Left ventricle myocardium superior (tissue), 1 donor: ENCODE measurements at regions of chr7 and their contacts with region 1.

Region 1: GRCh38 chr7:27160546-27161213 is 4.2 kb upstream of the HOXA7 start:
- DNase-seq: peak; percentile 89
- ATAC-seq: peak; percentile 89

Region 2: DNA sequence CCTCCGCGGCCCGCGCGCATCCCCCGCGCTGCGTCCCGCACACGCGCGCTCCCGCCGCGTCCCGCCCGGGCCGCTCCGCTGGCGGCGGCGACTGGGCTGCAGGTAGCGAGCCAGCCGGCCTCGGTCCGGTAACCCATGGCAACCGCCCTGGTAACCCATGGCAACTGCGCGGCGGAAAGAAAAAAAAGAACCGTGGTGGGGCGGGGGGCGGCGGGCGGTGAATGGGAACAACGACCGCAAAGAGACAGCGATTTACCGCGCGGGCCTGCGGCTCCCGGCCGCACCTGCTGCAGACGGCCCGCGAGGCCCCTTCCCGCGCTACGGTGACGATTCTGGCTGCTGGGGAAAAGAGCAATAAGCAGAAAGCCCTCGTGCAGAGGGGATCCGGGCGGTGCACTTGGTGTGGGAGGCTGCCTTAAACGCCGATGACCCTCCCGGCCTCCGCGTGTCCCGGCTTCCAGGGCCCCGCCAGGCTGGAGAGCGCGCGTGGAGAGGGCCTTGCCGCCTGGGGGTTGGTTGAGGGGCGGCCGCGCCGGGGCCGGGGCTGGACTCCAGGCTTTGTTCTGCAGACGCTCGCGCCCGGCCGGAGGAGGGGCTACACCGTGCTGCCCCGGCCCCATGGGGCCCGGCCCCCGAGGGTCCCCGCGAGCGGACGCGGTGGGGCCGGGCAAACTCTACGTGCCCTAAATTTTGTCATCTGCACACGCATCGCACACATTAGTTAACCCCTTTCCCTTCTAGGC is 784.3 kb before region 1 on chr7:
- intact Hi-C with region 1: loop called (anchors 10 kb)
- DNase-seq: peak; percentile 30
- ATAC-seq: peak; percentile 22

Region 3: GRCh38 chr7:26681819-26682418 is 478.8 kb before region 1 on chr7:
- intact Hi-C with region 1: loop called (anchors 5 kb)
- DNase-seq: no peak
- ATAC-seq: no peak

Region 4: DNA sequence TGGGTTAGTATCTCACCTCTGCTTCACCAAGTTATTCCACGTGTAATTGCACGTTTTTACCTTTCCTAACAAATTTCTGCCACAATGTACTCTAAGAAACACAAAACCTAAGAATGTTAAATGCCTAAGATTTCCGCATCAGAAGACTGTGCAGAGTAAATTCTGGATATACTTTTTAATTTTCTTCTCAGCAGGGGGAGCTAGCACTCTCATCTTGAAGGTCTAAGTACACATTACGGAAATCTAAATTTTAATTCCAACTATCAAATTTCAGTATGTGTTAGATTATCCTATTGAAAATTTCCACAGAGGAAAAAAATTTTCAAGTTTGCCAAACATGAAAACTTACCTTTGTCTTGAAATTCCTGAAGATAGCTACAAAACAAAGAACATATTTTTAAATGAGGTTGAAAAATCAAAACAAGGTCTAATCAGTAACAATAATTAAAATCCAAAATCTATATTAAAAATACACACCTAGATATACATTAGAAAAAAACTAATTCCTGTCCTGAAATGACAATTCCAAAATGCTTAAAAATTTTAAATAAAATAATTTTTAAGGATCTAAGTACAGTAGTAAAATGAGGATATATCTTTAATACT is 306.8 kb before region 1 on chr7:
- intact Hi-C with region 1: no loop called
- DNase-seq: no peak
- ATAC-seq: no peak

Region 5: DNA sequence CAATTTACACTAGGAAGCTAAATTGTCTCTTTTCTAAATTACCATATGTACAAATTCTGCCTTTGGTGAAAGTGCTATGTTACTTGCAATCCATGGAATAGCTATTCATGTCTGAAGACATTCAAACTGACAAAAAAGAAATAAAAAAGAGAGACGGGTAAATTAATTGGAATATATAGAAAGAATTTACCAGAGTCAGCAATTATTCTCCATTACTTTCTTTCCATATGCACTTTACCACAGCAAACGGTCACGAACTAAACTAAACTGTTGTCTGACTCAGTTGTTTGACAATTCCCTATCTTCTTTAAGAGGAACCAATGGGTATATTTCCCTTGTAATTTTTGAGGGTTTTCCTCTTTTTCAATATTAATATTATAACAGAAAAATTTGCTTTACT is 150.6 kb before region 1 on chr7:
- intact Hi-C with region 1: no loop called
- DNase-seq: no peak
- ATAC-seq: no peak